ENCODE measurements at regions of chr14 and their contacts with region 1.

Region 1: GRCh38 chr14:54902521-54903420 is at the start of gene GCH1:
- DNase-seq: peak; percentile 72 to 82 (median 79)
- H3K4me3 ChIP-seq: peak within 1 kb of the TSS; percentile 95
- H3K4me3 Mint-ChIP-seq: peak within 1 kb of the TSS; percentile 89 to 99 (median 91)
- H3K27ac ChIP-seq: peak within 1 kb of the TSS; percentile 80
- H3K27ac Mint-ChIP-seq: peak within 1 kb of the TSS; percentile 90 to 96 (median 94)
- H3K4me1 ChIP-seq: peaks cover 14% of the 10 kb centered on the region
- H3K4me1 Mint-ChIP-seq: peaks cover 20 to 40% (median 38%) of the 10 kb centered on the region in 3 donors
- H3K27me3 ChIP-seq: no peaks in the 10 kb centered on the region
- H3K27me3 Mint-ChIP-seq: no peaks in the 10 kb centered on the region
- total RNA-seq, gene GCH1: 26.4 TPM

Region 2: GRCh38 chr14:54818201-54819133 is 84.3 kb before region 1 on chr14:
- CTCF ChIA-PET with region 1: no interaction called
- POLR2A ChIA-PET with region 1: no interaction called
- DNase-seq: no peak
- H3K4me3 ChIP-seq: no peak overlapping the region
- H3K4me3 Mint-ChIP-seq: no peak overlapping the region
- H3K27ac ChIP-seq: no peak overlapping the region
- H3K27ac Mint-ChIP-seq: no peak overlapping the region
- H3K4me1 ChIP-seq: no peaks in the 10 kb centered on the region
- H3K4me1 Mint-ChIP-seq: no peaks in the 10 kb centered on the region
- H3K27me3 ChIP-seq: no peaks in the 10 kb centered on the region
- H3K27me3 Mint-ChIP-seq: peaks cover 6 to 9% of the 10 kb centered on the region in 2 donors

Region 3: GRCh38 chr14:54881235-54881760 is 21.5 kb before region 1 on chr14:
- CTCF ChIA-PET with region 1: interaction called, 21 read pairs
- POLR2A ChIA-PET with region 1: interaction called, 13 read pairs
- DNase-seq: peak in 2 of 5 donors; percentile 34 to 60
- H3K4me3 ChIP-seq: peak overlapping the region; percentile 48
- H3K4me3 Mint-ChIP-seq: peak overlapping the region; percentile 88 to 93 (median 89)
- H3K27ac ChIP-seq: peak overlapping the region; percentile 70
- H3K27ac Mint-ChIP-seq: peak overlapping the region; percentile 87 to 97 (median 96)
- H3K4me1 ChIP-seq: peaks cover 25% of the 10 kb centered on the region
- H3K4me1 Mint-ChIP-seq: peaks cover 38 to 62% (median 59%) of the 10 kb centered on the region in 3 donors
- H3K27me3 ChIP-seq: no peaks in the 10 kb centered on the region
- H3K27me3 Mint-ChIP-seq: no peaks in the 10 kb centered on the region

Region 4: DNA sequence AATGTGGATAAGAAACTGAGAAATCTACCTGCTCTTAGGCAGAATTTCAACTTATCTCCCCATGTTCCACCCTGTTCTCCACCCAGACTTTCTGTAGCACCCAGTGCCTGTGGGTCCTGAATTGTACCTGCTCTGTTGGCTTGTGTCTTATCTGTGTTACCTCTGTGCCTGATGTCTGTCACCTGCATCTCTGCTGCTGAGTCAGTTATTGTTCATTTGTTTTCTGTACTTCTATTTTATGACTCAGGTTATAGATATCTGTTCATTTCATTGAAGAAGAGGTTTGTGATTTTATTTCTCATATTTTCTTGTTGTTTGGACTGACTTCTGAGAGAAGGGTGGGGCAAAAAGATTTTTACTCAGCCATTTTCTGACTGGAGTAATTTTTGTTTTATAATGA is 135.9 kb after region 1 on chr14:
- CTCF ChIA-PET with region 1: no interaction called
- POLR2A ChIA-PET with region 1: no interaction called
- DNase-seq: no peak
- H3K4me3 ChIP-seq: no peak overlapping the region
- H3K4me3 Mint-ChIP-seq: no peak overlapping the region
- H3K27ac ChIP-seq: no peak overlapping the region
- H3K27ac Mint-ChIP-seq: peak overlapping the region in 3 of 8 donors; percentile 20 to 72 (median 45)
- H3K4me1 ChIP-seq: no peaks in the 10 kb centered on the region
- H3K4me1 Mint-ChIP-seq: peaks cover 9 to 17% (median 10%) of the 10 kb centered on the region in 3 donors
- H3K27me3 ChIP-seq: no peaks in the 10 kb centered on the region
- H3K27me3 Mint-ChIP-seq: no peaks in the 10 kb centered on the region